Activated CD8-positive, alpha-beta memory T cell treated with anti-CD3 and anti-CD28 coated beads, Interleukin-2, amount 10 ng/mL, durations not matched to agents 7 days and 5 days (primary cell): ENCODE measurements at regions of chr1 and their contacts with region 1.

Region 1: DNA sequence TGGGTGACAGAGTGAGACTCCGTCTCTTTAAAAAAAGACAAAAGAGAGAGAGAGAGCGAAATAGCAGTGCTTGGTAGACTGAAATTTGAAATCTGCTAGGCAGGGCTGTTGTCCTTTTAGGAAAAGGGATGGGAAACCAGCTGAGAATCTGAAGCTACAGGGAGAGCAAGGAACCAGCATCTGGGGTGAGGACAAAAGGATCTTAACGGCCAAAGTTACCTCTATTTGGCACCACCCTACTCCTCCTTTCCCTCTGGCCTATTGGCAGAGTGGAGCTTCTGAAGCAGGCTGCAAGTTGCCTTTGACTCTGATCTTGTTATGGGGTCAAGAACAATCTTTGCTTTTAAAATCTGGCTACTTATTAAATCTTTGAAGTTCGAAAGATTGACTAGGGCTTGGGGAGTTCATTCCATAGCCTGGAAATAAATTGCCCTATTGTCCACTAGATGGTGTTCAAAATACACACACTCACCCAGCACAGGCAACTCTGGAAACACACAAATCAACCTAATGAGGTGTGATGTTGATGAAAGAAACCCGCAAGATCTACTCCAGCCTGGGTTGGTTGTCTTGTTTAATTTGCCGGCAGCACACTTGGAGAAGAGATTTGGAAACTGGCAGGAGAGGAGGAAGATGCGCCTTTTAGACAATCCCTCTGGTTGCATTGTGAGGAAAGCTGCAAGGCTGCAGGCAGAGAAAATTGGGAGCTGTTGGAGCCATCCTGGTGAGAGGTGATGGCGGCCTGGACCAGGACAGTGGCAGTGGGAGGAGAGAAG is 16.5 kb upstream of the PARP1 start:
- DNase-seq: no peak
- ATAC-seq: peak; percentile 73
- H3K4me3 Mint-ChIP-seq: no peak overlapping the region
- H3K27ac Mint-ChIP-seq: no peak overlapping the region
- H3K4me1 Mint-ChIP-seq: peaks cover 8% of the 10 kb centered on the region
- H3K27me3 Mint-ChIP-seq: peaks cover 8% of the 10 kb centered on the region

Region 2: DNA sequence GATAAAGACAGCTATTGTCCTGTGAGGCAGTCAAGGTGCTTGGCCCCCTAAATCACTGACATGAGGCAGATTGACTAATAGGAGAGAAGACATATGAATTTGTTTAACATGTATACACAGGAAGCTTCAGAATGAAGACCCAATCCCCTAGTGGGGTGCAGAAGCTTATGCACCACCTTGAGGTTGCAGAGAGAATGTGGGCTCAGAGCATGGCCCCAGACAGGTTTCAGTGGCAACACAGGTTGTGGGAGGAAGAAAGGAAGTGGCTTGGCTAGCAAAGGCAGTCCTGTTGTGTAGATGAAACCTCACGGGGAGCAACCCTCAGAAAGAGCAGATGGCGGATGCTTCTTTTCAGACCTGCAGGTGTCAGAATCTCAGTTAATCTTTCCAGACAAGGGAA is 20.5 kb after region 1 on chr1:
- CTCF ChIA-PET with region 1: interaction called, 24 read pairs
- DNase-seq: peak; percentile 93
- ATAC-seq: peak; percentile 97
- H3K4me3 Mint-ChIP-seq: peak overlapping the region; percentile 23
- H3K27ac Mint-ChIP-seq: peak overlapping the region; percentile 76
- H3K4me1 Mint-ChIP-seq: peaks cover 30% of the 10 kb centered on the region
- H3K27me3 Mint-ChIP-seq: peaks cover 49% of the 10 kb centered on the region

Region 3: DNA sequence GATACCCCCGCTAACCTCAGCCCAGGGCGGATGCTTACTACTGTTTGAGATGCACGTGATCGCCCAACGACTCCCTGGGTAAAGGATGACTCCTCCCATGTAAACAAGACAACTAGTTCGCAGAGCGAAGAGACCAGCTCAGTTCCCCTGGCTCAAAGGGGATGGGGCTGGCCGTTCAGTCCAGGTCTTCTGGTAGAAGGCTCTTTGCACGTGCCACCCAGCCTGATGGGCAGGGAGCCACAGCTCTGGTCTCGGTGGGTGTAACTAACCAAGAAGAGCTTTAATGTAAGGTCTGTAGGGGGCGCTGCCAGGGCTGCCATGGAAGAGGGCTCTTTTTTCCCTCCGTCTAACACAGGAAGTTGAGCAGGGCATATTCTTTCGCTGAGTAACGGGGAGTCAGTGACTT is 32.9 kb after region 1 on chr1:
- CTCF ChIA-PET with region 1: interaction called, 11 read pairs
- DNase-seq: peak; percentile 75
- ATAC-seq: peak; percentile 92
- H3K4me3 Mint-ChIP-seq: peak overlapping the region; percentile 69
- H3K27ac Mint-ChIP-seq: peak overlapping the region; percentile 87
- H3K4me1 Mint-ChIP-seq: peaks cover 11% of the 10 kb centered on the region
- H3K27me3 Mint-ChIP-seq: peaks cover 2% of the 10 kb centered on the region

Region 4: GRCh38 chr1:226547754-226548191 is 123.4 kb after region 1 on chr1:
- CTCF ChIA-PET with region 1: interaction called, 22 read pairs
- DNase-seq: peak; percentile 71
- ATAC-seq: peak; percentile 48
- H3K4me3 Mint-ChIP-seq: no peak overlapping the region
- H3K27ac Mint-ChIP-seq: no peak overlapping the region
- H3K4me1 Mint-ChIP-seq: peaks cover 10% of the 10 kb centered on the region
- H3K27me3 Mint-ChIP-seq: peaks cover 74% of the 10 kb centered on the region

Region 5: GRCh38 chr1:226608699-226609505 is 184.5 kb after region 1 on chr1:
- CTCF ChIA-PET with region 1: interaction called, 12 read pairs
- DNase-seq: peak; percentile 76
- ATAC-seq: peak; percentile 85
- H3K4me3 Mint-ChIP-seq: no peak overlapping the region
- H3K27ac Mint-ChIP-seq: no peak overlapping the region
- H3K4me1 Mint-ChIP-seq: no peaks in the 10 kb centered on the region
- H3K27me3 Mint-ChIP-seq: no peaks in the 10 kb centered on the region

Region 6: GRCh38 chr1:226642876-226643576 is 218.6 kb after region 1 on chr1:
- CTCF ChIA-PET with region 1: no interaction called
- DNase-seq: peak; percentile 71
- ATAC-seq: peak; percentile 75
- H3K4me3 Mint-ChIP-seq: no peak overlapping the region
- H3K27ac Mint-ChIP-seq: peak overlapping the region; percentile 82
- H3K4me1 Mint-ChIP-seq: peaks cover 39% of the 10 kb centered on the region
- H3K27me3 Mint-ChIP-seq: no peaks in the 10 kb centered on the region